Dorsolateral prefrontal cortex (tissue), 120 donors: ENCODE measurements at regions of chr7 and their contacts with region 1.

Region 1: DNA sequence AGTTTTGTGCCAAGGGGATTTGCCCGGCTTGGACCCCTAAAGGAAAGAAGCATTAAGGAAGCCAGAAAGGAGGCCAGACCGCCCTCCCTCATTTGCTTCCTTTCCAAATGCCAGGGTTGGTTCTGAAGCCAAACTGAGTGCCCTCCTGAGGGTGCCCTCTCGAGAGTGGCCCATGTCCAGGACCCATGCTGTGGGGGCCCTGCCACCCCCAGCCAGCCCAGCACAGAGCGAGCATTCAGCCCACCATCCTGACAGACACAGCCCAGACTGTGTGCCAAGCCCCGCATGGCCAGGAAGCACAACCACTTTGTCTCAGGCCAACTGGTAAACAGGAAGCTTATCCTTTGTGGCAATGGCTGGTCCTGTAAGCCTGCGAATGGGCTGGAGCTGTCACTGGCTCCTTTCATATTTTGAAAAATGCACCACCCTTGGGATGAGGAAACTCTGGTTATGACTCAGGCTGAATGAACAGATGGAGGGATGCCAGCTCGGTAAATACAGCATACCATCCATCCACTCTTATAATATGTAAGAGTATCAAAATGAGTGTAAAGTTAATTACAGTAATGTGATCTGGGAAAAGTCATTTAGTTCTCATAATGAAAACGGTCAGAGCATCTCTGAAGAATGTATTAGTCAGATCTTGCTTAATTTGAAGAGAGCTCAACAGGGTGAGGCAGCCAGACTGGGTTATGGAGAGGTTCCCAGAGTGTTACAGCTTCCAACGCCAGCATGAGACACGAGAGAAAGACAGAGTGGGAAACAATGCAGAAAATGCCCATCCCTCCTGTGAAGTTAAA is 65.0 kb downstream of the STK17A start:
- DNase-seq: peak; percentile 33 to 78 (median 62)
- H3K4me3 ChIP-seq: peak overlapping the region in 26 of 59 donors; percentile 4 to 42 (median 24)
- H3K27ac ChIP-seq: peak overlapping the region; percentile 40 to 93 (median 86)
- H3K27me3 ChIP-seq: no peaks in the 10 kb centered on the region
- CTCF ChIP-seq: no peak

Region 2: GRCh38 chr7:43108255-43109011 is 539.4 kb before region 1 on chr7:
- intact Hi-C with region 1: no loop called
- DNase-seq: peak in 9 of 10 donors; percentile 50 to 75 (median 66)
- H3K4me3 ChIP-seq: no peak overlapping the region
- H3K27ac ChIP-seq: no peak overlapping the region
- H3K27me3 ChIP-seq: peaks cover 0 to 30% (median 9%) of the 10 kb centered on the region in 45 donors
- CTCF ChIP-seq: peak; percentile 9 to 79 (median 64)

Region 3: GRCh38 chr7:43444711-43445578 is 202.9 kb before region 1 on chr7:
- intact Hi-C with region 1: no loop called
- DNase-seq: no peak
- H3K4me3 ChIP-seq: no peak overlapping the region
- H3K27ac ChIP-seq: peak overlapping the region in 34 of 59 donors; percentile 5 to 80 (median 50)
- H3K27me3 ChIP-seq: no peaks in the 10 kb centered on the region
- CTCF ChIP-seq: no peak

Region 4: DNA sequence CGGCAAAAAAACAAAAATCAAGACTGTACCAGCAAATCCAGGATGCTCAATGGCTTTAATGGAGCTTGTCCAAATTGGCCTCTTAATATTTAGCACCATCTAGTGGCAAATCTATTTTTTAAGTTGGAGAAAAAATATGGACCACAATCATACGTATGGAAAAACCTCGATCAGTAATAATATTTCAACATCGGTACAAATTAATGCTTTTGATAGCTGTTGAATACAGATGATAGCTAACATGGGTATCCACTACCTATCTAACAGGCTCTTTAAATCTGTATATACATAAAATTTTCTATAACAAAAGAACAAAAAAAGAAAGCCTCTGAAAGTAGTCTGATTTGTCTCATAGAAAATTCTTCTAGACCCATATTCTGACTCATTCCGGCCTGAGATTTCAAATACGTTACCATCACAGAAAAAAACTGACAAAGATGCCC is 52.2 kb after region 1 on chr7:
- intact Hi-C with region 1: loop called in 1 of 2 experiments (anchors 5 kb)
- DNase-seq: no peak
- H3K4me3 ChIP-seq: peak overlapping the region in 31 of 59 donors; percentile 0 to 39 (median 20)
- H3K27ac ChIP-seq: peak overlapping the region in 2 of 59 donors; percentile 12 to 15
- H3K27me3 ChIP-seq: no peaks in the 10 kb centered on the region
- CTCF ChIP-seq: peak; percentile 64 to 93 (median 76)